ENCODE measurements at regions of chr6 and their contacts with region 1.

Region 1: DNA sequence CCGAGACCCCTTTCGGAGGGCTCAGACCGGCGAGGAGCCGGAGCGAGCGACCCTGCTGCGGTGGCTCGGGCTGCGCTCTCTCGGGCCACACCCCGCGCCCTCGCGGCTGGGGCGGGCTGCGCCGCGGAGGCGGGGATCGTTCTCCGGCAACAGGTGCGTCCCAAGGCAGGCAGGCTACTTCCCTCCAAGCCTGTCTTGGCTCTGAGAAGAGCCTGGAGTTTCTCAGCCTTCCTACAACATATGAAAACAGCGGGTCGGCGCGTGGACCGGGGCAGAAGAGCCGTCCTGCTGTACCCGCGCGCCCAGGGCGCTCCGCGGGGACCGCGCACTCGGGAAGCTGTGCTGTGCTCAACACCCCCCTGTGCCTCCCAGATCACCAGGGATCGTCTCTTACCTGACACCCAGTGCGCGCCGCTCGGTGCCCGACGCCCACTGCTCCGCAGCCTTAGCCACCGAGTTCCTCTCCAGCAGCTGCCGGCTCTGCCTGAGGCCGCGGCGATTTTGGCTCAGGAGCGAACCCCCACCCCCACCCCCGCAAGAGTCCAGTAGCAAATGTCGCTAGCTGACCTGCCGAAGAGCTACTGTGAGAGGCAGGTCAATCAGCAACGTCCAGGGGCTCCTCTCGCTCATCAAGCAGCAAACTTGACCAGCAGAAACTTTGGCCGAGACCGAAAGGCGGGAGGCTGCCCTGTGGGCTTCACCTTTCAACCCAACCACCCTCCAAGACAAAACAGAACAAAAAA is 3.7 kb upstream of the OLIG3 start:
- DNase-seq: peak; percentile 37
- ATAC-seq: peak; percentile 34
- H3K4me3 Mint-ChIP-seq: peak overlapping the region; percentile 66
- H3K27ac Mint-ChIP-seq: no peak overlapping the region
- H3K4me1 Mint-ChIP-seq: peaks cover 44% of the 10 kb centered on the region
- H3K27me3 Mint-ChIP-seq: peaks cover 61% of the 10 kb centered on the region
- CTCF ChIP-seq: no peak

Region 2: DNA sequence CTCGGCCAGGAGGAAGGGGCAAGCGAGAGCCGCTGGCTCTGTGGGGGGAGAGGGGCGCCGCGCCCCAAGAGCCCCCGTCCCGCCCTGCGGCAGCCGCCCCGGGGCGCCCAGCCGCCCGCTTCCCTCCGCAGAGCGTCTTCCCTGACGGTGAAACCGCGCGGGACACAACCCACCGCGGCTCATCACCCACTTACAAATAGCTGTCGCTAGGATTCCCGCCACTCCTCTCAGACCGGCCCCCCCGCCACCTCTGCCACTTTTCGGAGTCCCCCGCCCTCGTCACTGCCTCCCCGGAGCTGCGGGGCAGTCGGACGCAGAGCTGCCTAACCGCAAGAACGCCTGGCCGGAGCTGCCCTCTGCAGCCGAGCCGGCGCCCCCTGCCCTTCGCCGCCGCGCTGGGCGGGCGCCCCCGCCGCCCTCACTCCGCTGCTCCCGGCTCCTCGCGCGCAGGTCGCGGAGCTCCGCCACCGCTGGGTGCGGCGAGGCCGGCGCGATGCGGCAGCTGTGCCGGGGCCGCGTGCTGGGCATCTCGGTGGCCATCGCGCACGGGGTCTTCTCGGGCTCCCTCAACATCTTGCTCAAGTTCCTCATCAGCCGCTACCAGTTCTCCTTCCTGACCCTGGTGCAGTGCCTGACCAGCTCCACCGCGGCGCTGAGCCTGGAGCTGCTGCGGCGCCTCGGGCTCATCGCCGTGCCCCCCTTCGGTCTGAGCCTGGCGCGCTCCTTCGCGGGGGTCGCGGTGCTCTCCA is 575.8 kb before region 1 on chr6 and contains the start of gene SLC35D3:
- CTCF ChIA-PET with region 1: no interaction called
- POLR2A ChIA-PET with region 1: no interaction called
- intact Hi-C with region 1: loop called (anchors 5 kb)
- DNase-seq: peak; percentile 36
- ATAC-seq: peak; percentile 52
- H3K4me3 Mint-ChIP-seq: peak within 1 kb of the TSS; percentile 83
- H3K27ac Mint-ChIP-seq: no peak within 1 kb of the TSS
- H3K4me1 Mint-ChIP-seq: peaks cover 29% of the 10 kb centered on the region
- H3K27me3 Mint-ChIP-seq: peaks cover 45% of the 10 kb centered on the region
- CTCF ChIP-seq: no peak
- total RNA-seq, gene SLC35D3: not detected in 2 replicates

Region 3: DNA sequence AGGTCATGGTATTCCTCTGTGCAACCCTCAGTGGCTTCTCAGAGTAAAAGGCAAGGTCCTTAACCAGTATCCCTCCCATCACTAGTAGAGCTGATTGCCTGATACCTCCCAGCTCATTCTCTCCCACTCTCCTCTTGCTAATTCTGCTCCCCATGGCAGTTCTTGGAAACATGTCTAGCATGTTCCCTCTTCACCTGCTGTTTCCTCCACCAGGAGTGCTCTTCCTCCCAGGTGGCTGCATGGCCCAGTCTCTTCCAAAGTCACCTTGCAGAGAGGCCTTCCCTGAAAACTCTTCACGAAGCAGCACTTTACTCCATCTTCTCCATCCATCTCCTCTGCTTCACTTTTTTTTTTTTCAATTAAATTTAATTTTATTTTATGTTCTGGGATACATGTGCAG is 32.5 kb after region 1 on chr6:
- CTCF ChIA-PET with region 1: no interaction called
- POLR2A ChIA-PET with region 1: no interaction called
- intact Hi-C with region 1: no loop called
- DNase-seq: no peak
- ATAC-seq: no peak
- H3K4me3 Mint-ChIP-seq: no peak overlapping the region
- H3K27ac Mint-ChIP-seq: no peak overlapping the region
- H3K4me1 Mint-ChIP-seq: no peaks in the 10 kb centered on the region
- H3K27me3 Mint-ChIP-seq: peaks cover 25% of the 10 kb centered on the region
- CTCF ChIP-seq: no peak